SK-N-SH (cell line): ENCODE measurements at regions of chr2 and their contacts with region 1.

Region 1: GRCh38 chr2:77521931-77522470 is at the start of gene LRRTM4:
- DNase-seq: peak; percentile 33
- H3K4me3 ChIP-seq: peak within 1 kb of the TSS in 1 of 2 experiments; percentile 51; a peak in 2 of 4 replicates
- H3K27ac ChIP-seq: peak within 1 kb of the TSS in 1 of 2 experiments; percentile 94; a peak in 2 of 4 replicates
- H3K4me1 ChIP-seq: no peaks in the 10 kb centered on the region; a peak in 2 of 4 replicates
- H3K27me3 ChIP-seq: no peaks in the 10 kb centered on the region
- CTCF ChIP-seq: no peak
- EP300 ChIP-seq: no peak
- RAD21 ChIP-seq: peak; percentile 85
- polyA plus RNA-seq, gene LRRTM4: 0.10 and 0.39 TPM in 2 replicates

Region 2: GRCh38 chr2:78979380-78980151 is 1457.6 kb after region 1 on chr2:
- CTCF ChIA-PET with region 1: interaction called, 23 read pairs
- POLR2A ChIA-PET with region 1: no interaction called
- DNase-seq: peak; percentile 63
- H3K4me3 ChIP-seq: no peak overlapping the region; a peak in 1 of 4 replicates
- H3K27ac ChIP-seq: peak overlapping the region in 1 of 2 experiments; percentile 48; a peak in 1 of 4 replicates
- H3K4me1 ChIP-seq: peaks cover 0 to 3% of the 10 kb centered on the region in 2 experiments; a peak in 1 of 4 replicates
- H3K27me3 ChIP-seq: no peaks in the 10 kb centered on the region
- CTCF ChIP-seq: peak; percentile 77
- EP300 ChIP-seq: no peak
- RAD21 ChIP-seq: peak; percentile 97